ENCODE measurements at regions of chr2 and their contacts with region 1.

Region 1: DNA sequence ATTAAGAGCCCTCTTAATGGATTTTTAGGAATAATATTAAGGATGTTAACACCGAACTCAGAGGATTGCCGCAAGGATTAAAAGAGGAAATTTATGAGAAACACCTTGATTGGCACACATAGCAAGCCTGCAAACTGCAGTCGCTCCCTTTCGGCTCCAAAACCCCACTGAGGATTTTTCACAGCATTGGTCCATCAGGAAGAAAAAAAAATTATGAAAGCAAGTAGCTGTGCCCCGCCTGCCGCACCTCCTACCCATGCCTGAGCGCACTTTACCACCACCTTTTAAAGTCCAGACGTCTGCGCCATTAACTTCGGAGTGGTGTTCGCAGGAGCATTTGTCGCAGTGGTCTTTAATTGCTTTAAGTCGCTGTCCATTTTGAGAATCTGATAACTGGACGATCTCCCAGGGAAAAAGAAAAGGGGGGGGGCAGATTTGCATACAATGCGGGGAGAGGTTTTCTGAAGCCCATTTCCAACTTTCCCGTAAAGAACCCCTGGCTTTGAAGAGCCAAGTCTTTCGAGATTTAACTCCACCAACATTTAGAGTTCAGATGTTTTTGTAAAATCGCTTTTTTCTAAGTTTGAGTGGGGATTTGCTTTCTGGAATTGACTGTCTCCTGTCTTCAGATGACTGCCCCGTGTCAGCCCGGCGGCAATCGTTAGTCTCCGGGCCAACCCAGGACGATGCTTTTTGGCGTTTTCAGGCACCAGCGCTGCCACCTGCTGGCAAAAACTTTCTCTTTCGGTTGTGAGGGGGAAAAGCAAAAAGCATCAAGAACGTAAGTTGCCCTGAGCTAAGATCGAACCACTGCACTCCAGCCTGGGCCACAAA is 914 bp upstream of the TRABD2A start:
- DNase-seq: peak; percentile 90
- H3K4me3 Mint-ChIP-seq: peak overlapping the region; percentile 97
- H3K27ac Mint-ChIP-seq: peak overlapping the region; percentile 98
- H3K4me1 Mint-ChIP-seq: peaks cover 65% of the 10 kb centered on the region
- H3K27me3 Mint-ChIP-seq: no peaks in the 10 kb centered on the region

Region 2: GRCh38 chr2:84817239-84817655 is 64.6 kb before region 1 on chr2:
- CTCF ChIA-PET with region 1: no interaction called
- POLR2A ChIA-PET with region 1: no interaction called
- DNase-seq: no peak
- H3K4me3 Mint-ChIP-seq: no peak overlapping the region
- H3K27ac Mint-ChIP-seq: no peak overlapping the region
- H3K4me1 Mint-ChIP-seq: peaks cover 36% of the 10 kb centered on the region
- H3K27me3 Mint-ChIP-seq: no peaks in the 10 kb centered on the region

Region 3: GRCh38 chr2:84870306-84870705 is 11.5 kb before region 1 on chr2:
- CTCF ChIA-PET with region 1: interaction called, 19 read pairs
- POLR2A ChIA-PET with region 1: no interaction called
- DNase-seq: no peak
- H3K4me3 Mint-ChIP-seq: no peak overlapping the region
- H3K27ac Mint-ChIP-seq: no peak overlapping the region
- H3K4me1 Mint-ChIP-seq: peaks cover 74% of the 10 kb centered on the region
- H3K27me3 Mint-ChIP-seq: no peaks in the 10 kb centered on the region

Region 4: DNA sequence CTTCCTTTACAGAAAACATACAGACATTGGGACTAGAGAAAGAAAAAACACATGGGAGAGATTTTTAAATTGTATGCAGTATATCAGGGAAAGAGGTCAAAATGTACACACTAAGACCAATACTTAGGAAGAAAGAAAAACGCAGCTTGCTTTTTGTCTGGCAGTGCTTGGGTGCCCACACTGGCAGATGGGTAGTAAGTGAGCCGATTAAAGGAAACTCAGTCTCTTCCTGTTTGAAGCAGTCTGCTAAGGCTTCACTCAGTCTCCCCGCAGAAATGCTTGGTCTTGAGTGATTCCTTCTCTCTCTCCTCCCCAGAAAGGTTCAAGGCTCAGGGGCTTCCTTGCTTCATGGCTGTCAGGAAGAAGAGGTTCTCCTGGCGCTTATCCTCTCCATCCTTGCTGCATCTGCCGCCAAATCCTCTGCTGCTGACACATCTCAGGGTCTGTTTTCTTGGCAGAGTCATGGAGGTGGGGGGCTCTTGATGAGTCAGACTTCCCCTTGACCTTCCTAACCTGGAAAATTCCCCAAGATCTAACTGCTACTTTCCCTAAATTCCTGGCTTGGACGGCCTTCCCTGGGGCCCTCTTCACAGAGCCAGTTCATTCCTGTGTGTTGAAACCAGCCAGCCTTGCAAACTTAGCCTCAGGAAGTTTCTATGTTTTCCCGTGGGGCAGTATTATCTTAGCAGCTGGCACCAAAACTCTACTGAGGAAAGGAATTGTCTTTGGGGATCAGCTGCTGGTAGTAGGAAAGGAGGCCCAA is 13.1 kb after region 1 on chr2:
- CTCF ChIA-PET with region 1: interaction called, 17 read pairs
- POLR2A ChIA-PET with region 1: interaction called, 4 read pairs
- DNase-seq: peak; percentile 43
- H3K4me3 Mint-ChIP-seq: peak overlapping the region; percentile 17
- H3K27ac Mint-ChIP-seq: peak overlapping the region; percentile 80
- H3K4me1 Mint-ChIP-seq: peaks cover 69% of the 10 kb centered on the region
- H3K27me3 Mint-ChIP-seq: no peaks in the 10 kb centered on the region

Region 5: GRCh38 chr2:84905181-84906107 is 23.6 kb after region 1 on chr2 and contains the start of gene TMSB10:
- CTCF ChIA-PET with region 1: interaction called, 6 read pairs
- POLR2A ChIA-PET with region 1: interaction called, 13 read pairs
- DNase-seq: peak; percentile 90
- H3K4me3 Mint-ChIP-seq: peak within 1 kb of the TSS; percentile 91
- H3K27ac Mint-ChIP-seq: peak within 1 kb of the TSS; percentile 96
- H3K4me1 Mint-ChIP-seq: peaks cover 71% of the 10 kb centered on the region
- H3K27me3 Mint-ChIP-seq: no peaks in the 10 kb centered on the region
- total RNA-seq, gene TMSB10: 5,491 to 5,845 TPM